ENCODE measurements at regions of chr6 and their contacts with region 1.

Region 1: DNA sequence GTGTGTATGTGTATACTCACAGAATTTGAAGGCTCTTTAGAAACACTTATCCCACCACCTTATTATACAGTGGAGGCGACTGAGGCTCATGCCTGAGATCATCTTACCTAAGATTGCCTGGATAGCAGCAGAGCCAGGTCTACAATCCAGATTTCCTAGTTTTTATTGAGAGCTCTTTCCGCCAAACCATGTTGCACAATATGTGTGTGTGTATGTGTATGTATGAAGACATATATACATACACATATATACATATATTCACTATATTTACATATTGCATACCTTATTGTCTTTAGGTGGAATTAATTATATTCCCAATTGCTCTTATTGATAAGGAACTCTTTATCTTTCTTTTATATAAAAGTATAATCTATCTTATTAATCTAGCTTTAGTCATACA is 130.6 kb downstream of the AFG1L start:
- DNase-seq: no peak
- H3K4me3 ChIP-seq: no peak overlapping the region
- H3K27ac ChIP-seq: no peak overlapping the region
- H3K4me1 ChIP-seq: no peaks in the 10 kb centered on the region
- H3K27me3 ChIP-seq: no peaks in the 10 kb centered on the region
- CTCF ChIP-seq: no peak

Region 2: GRCh38 chr6:108365478-108365877 is 60.0 kb before region 1 on chr6:
- CTCF ChIA-PET with region 1: no interaction called
- dilution Hi-C with region 1: loop called (anchors 5 kb)
- in situ Hi-C with region 1: no loop called
- intact Hi-C with region 1: no loop called
- DNase-seq: no peak
- H3K4me3 ChIP-seq: no peak overlapping the region
- H3K27ac ChIP-seq: no peak overlapping the region
- H3K4me1 ChIP-seq: peaks cover 4% of the 10 kb centered on the region
- H3K27me3 ChIP-seq: no peaks in the 10 kb centered on the region
- CTCF ChIP-seq: no peak

Region 3: DNA sequence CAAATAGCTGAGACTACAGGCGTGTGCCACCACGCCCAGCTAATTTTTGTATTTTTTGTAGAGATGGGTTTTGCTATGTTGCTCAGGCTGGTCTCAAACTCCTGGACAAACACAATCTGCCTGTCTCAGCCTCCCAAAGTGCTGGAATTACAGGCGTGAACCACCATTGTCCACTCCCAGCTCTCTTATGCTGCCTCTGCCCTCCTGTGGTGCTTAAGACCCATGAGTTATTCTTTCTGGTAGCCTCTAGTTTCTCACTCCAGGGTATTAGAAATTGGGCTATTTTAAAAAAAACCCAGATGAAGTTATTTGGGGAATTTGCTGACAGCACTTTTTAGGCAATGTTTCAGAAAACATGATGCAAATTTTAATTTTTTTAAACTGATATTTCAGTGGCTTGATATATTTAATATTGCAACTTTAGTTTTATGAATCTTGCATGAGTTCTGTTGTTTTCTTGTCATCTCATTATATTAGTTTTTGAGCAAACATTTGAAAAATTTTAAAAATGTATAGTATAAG is 21.3 kb after region 1 on chr6:
- CTCF ChIA-PET with region 1: no interaction called
- dilution Hi-C with region 1: no loop called
- in situ Hi-C with region 1: no loop called
- intact Hi-C with region 1: no loop called
- DNase-seq: no peak
- H3K4me3 ChIP-seq: no peak overlapping the region
- H3K27ac ChIP-seq: no peak overlapping the region
- H3K4me1 ChIP-seq: no peaks in the 10 kb centered on the region
- H3K27me3 ChIP-seq: no peaks in the 10 kb centered on the region
- CTCF ChIP-seq: no peak

Region 4: DNA sequence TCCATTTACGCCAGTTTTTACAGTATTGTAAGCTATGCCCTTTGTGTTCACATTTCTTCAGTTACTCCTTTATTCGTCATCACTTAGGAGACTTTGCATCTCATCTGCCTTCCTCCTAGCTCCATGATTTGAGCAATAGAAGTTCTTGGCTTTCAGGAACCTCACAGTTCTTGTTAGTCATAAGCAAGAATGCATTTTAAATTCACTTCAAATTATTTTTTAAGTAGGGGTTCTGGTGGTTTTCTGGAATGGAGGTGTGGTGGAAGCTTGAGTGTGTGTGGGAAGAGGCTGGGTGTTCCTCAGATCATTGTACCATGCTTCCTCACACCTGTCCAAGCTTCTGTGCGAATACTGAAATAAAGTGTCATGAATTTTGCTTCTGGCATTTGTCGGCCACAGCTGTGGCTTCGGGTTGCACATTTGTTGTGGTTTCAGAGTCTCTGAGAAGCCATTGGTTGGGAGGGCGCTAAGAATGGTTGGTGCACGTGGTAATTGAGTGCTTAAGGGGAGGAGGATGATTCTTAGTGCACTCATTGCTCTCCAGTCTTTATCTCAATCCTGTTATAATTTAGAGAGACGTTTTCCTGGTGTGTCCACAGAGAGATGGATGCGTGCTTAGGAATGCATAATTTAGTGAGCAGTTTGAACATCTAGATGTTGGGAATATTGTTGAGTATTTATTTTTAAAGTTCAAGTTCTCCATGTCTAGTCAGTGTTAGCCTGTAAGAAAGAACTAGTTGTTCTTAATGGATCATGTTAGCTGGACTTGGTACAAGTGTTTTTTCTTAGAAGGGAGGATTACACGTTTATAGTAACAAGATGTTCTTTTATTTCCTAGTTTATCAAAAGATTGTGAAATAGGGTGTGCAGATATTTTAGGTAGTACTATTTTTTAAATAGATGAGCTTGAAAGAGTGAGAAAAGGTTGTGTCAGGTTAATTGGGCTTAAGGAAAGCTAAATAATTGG is 167.2 kb after region 1 on chr6:
- CTCF ChIA-PET with region 1: no interaction called
- dilution Hi-C with region 1: no loop called
- in situ Hi-C with region 1: no loop called
- intact Hi-C with region 1: no loop called
- DNase-seq: peak; percentile 85
- H3K4me3 ChIP-seq: no peak overlapping the region
- H3K27ac ChIP-seq: no peak overlapping the region
- H3K4me1 ChIP-seq: peaks cover 67% of the 10 kb centered on the region
- H3K27me3 ChIP-seq: no peaks in the 10 kb centered on the region
- CTCF ChIP-seq: no peak

Region 5: GRCh38 chr6:109117346-109118035 is 692.1 kb after region 1 on chr6:
- CTCF ChIA-PET with region 1: no interaction called
- dilution Hi-C with region 1: no loop called
- in situ Hi-C with region 1: no loop called
- intact Hi-C with region 1: no loop called
- DNase-seq: peak; percentile 60
- H3K4me3 ChIP-seq: no peak overlapping the region
- H3K27ac ChIP-seq: peak overlapping the region; percentile 3
- H3K4me1 ChIP-seq: peaks cover 28% of the 10 kb centered on the region
- H3K27me3 ChIP-seq: no peaks in the 10 kb centered on the region
- CTCF ChIP-seq: no peak